CD4-positive, alpha-beta T cell (primary cell): ENCODE measurements at regions of chr3 and their contacts with region 1.

Region 1: GRCh38 chr3:32143849-32144757 is 37.7 kb downstream of the GPD1L start:
- DNase-seq: peak in 12 of 14 experiments; percentile 5 to 81 (median 30)
- ATAC-seq: peak; percentile 55
- H3K4me3 ChIP-seq: no peak overlapping the region
- H3K4me3 Mint-ChIP-seq: no peak overlapping the region
- H3K27ac ChIP-seq: no peak overlapping the region
- H3K27ac Mint-ChIP-seq: no peak overlapping the region
- H3K4me1 ChIP-seq: no peaks in the 10 kb centered on the region
- H3K4me1 Mint-ChIP-seq: peaks cover 11% of the 10 kb centered on the region
- H3K27me3 ChIP-seq: no peaks in the 10 kb centered on the region
- H3K27me3 Mint-ChIP-seq: no peaks in the 10 kb centered on the region
- CTCF ChIP-seq: peak; percentile 94

Region 2: GRCh38 chr3:30768703-30769685 is 1375.1 kb before region 1 on chr3:
- CTCF ChIA-PET with region 1: no interaction called
- POLR2A ChIA-PET with region 1: no interaction called
- intact Hi-C with region 1: loop called in 1 of 2 experiments (anchors 1 kb)
- DNase-seq: peak; percentile 49 to 78 (median 64)
- ATAC-seq: peak; percentile 60
- H3K4me3 ChIP-seq: no peak overlapping the region
- H3K4me3 Mint-ChIP-seq: no peak overlapping the region
- H3K27ac ChIP-seq: no peak overlapping the region
- H3K27ac Mint-ChIP-seq: no peak overlapping the region
- H3K4me1 ChIP-seq: no peaks in the 10 kb centered on the region
- H3K4me1 Mint-ChIP-seq: peaks cover 5% of the 10 kb centered on the region
- H3K27me3 ChIP-seq: no peaks in the 10 kb centered on the region
- H3K27me3 Mint-ChIP-seq: peaks cover 9% of the 10 kb centered on the region
- CTCF ChIP-seq: peak; percentile 83

Region 3: DNA sequence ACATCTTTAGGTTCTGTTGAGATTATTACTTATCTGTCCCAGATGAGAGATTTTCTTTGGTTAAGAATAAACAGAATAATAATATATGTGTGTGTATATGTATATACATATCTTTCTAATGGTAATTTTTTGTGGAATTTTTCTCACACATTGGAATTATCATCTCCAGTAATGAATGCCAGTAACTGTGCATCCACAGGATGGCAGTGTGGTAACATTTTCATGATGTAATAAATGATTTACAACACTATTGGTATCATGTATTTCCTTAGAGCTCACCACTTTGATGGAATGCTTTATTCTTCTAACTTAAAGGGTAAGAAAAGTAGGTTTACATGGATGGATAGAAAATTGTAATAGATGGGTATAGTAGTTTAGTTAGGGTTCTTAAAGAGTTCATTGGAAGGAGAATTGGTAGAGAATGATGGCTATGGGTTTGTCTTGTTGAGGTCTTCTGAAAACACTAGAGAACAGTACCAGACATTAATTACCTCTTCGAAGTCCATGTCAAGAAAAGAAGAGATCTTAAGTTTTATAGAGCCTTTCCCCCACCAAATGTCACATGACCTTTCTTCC is 533.3 kb before region 1 on chr3:
- CTCF ChIA-PET with region 1: no interaction called
- POLR2A ChIA-PET with region 1: no interaction called
- intact Hi-C with region 1: loop called in 1 of 2 experiments (anchors 2 kb)
- DNase-seq: peak in 3 of 14 experiments; percentile 14 to 38 (median 25)
- ATAC-seq: no peak
- H3K4me3 ChIP-seq: no peak overlapping the region
- H3K4me3 Mint-ChIP-seq: no peak overlapping the region
- H3K27ac ChIP-seq: no peak overlapping the region
- H3K27ac Mint-ChIP-seq: peak overlapping the region; percentile 6
- H3K4me1 ChIP-seq: no peaks in the 10 kb centered on the region
- H3K4me1 Mint-ChIP-seq: peaks cover 82% of the 10 kb centered on the region
- H3K27me3 ChIP-seq: no peaks in the 10 kb centered on the region
- H3K27me3 Mint-ChIP-seq: no peaks in the 10 kb centered on the region
- CTCF ChIP-seq: no peak

Region 4: GRCh38 chr3:31724661-31725060 is 419.4 kb before region 1 on chr3:
- CTCF ChIA-PET with region 1: no interaction called
- POLR2A ChIA-PET with region 1: no interaction called
- intact Hi-C with region 1: loop called in 1 of 2 experiments (anchors 10 kb)
- DNase-seq: no peak
- ATAC-seq: no peak
- H3K4me3 ChIP-seq: no peak overlapping the region
- H3K4me3 Mint-ChIP-seq: no peak overlapping the region
- H3K27ac ChIP-seq: no peak overlapping the region
- H3K27ac Mint-ChIP-seq: no peak overlapping the region
- H3K4me1 ChIP-seq: no peaks in the 10 kb centered on the region
- H3K4me1 Mint-ChIP-seq: no peaks in the 10 kb centered on the region
- H3K27me3 ChIP-seq: peaks cover 0 to 2% of the 10 kb centered on the region in 2 experiments
- H3K27me3 Mint-ChIP-seq: no peaks in the 10 kb centered on the region
- CTCF ChIP-seq: no peak

Region 5: GRCh38 chr3:32018757-32019564 is 125.1 kb before region 1 on chr3:
- CTCF ChIA-PET with region 1: interaction called, 24 read pairs
- POLR2A ChIA-PET with region 1: interaction called, 4 read pairs
- intact Hi-C with region 1: loop called (anchors 1 kb)
- DNase-seq: peak in 4 of 14 experiments; percentile 13 to 62 (median 54)
- ATAC-seq: no peak
- H3K4me3 ChIP-seq: no peak overlapping the region
- H3K4me3 Mint-ChIP-seq: no peak overlapping the region
- H3K27ac ChIP-seq: no peak overlapping the region
- H3K27ac Mint-ChIP-seq: no peak overlapping the region
- H3K4me1 ChIP-seq: no peaks in the 10 kb centered on the region
- H3K4me1 Mint-ChIP-seq: no peaks in the 10 kb centered on the region
- H3K27me3 ChIP-seq: no peaks in the 10 kb centered on the region
- H3K27me3 Mint-ChIP-seq: no peaks in the 10 kb centered on the region
- CTCF ChIP-seq: peak; percentile 88

Region 6: GRCh38 chr3:32093204-32093603 is 50.9 kb before region 1 on chr3:
- CTCF ChIA-PET with region 1: no interaction called
- POLR2A ChIA-PET with region 1: no interaction called
- intact Hi-C with region 1: no loop called
- DNase-seq: no peak
- ATAC-seq: no peak
- H3K4me3 ChIP-seq: no peak overlapping the region
- H3K4me3 Mint-ChIP-seq: no peak overlapping the region
- H3K27ac ChIP-seq: no peak overlapping the region
- H3K27ac Mint-ChIP-seq: no peak overlapping the region
- H3K4me1 ChIP-seq: no peaks in the 10 kb centered on the region
- H3K4me1 Mint-ChIP-seq: peaks cover 7% of the 10 kb centered on the region
- H3K27me3 ChIP-seq: no peaks in the 10 kb centered on the region
- H3K27me3 Mint-ChIP-seq: peaks cover 5% of the 10 kb centered on the region
- CTCF ChIP-seq: no peak

Region 7: DNA sequence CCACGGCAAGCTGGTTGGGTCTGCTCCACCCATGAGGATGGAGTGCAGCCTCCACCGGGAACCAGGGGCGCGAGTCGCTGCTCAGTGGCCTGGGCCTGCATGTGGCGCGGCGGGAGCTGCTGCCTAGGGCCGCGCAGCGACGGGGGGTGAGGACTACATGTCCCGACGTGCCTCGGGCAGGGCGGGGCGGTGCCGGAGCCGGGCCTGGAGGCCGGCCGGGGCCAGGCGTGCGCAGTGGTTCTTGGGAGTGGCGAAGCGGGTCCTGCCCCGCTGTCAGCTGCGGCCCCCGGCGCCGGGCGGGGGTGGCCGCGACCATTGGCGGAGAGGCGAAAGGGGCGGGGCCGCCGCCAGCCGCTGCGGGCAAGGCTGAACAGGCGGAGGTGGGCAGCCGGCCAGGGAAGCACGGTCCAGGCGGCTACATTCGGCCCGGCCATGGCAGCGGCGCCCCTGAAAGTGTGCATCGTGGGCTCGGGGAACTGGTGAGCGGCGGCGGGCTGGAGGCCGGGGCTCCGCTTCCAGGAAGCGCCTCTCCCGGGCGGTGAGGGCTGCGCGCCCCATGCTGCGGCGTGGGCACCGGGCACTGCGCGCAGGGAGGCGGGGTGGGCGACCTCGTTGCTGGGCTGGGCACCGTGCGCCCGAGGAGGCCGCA is 37.7 kb before region 1 on chr3 and contains the start of gene GPD1L:
- CTCF ChIA-PET with region 1: interaction called, 3 read pairs
- POLR2A ChIA-PET with region 1: interaction called, 3 read pairs
- intact Hi-C with region 1: loop called (anchors 5 kb)
- DNase-seq: peak; percentile 76 to 96 (median 90)
- ATAC-seq: peak; percentile 97
- H3K4me3 ChIP-seq: peak within 1 kb of the TSS; percentile 80
- H3K4me3 Mint-ChIP-seq: peak within 1 kb of the TSS; percentile 97
- H3K27ac ChIP-seq: peak within 1 kb of the TSS; percentile 21 to 29
- H3K27ac Mint-ChIP-seq: peak within 1 kb of the TSS; percentile 66
- H3K4me1 ChIP-seq: peaks cover 39% of the 10 kb centered on the region
- H3K4me1 Mint-ChIP-seq: peaks cover 34% of the 10 kb centered on the region
- H3K27me3 ChIP-seq: no peaks in the 10 kb centered on the region
- H3K27me3 Mint-ChIP-seq: no peaks in the 10 kb centered on the region
- CTCF ChIP-seq: no peak
- total RNA-seq, gene GPD1L: 15.3 to 16.0 TPM

Region 8: GRCh38 chr3:32121096-32121495 is 23.0 kb before region 1 on chr3:
- CTCF ChIA-PET with region 1: no interaction called
- POLR2A ChIA-PET with region 1: no interaction called
- intact Hi-C with region 1: no loop called
- DNase-seq: no peak
- ATAC-seq: no peak
- H3K4me3 ChIP-seq: no peak overlapping the region
- H3K4me3 Mint-ChIP-seq: no peak overlapping the region
- H3K27ac ChIP-seq: no peak overlapping the region
- H3K27ac Mint-ChIP-seq: no peak overlapping the region
- H3K4me1 ChIP-seq: peaks cover 7% of the 10 kb centered on the region
- H3K4me1 Mint-ChIP-seq: peaks cover 51% of the 10 kb centered on the region
- H3K27me3 ChIP-seq: no peaks in the 10 kb centered on the region
- H3K27me3 Mint-ChIP-seq: no peaks in the 10 kb centered on the region
- CTCF ChIP-seq: no peak

Region 9: GRCh38 chr3:32646761-32647160 is 502.7 kb after region 1 on chr3:
- CTCF ChIA-PET with region 1: no interaction called
- POLR2A ChIA-PET with region 1: no interaction called
- intact Hi-C with region 1: no loop called
- DNase-seq: no peak
- ATAC-seq: no peak
- H3K4me3 ChIP-seq: no peak overlapping the region
- H3K4me3 Mint-ChIP-seq: no peak overlapping the region
- H3K27ac ChIP-seq: no peak overlapping the region
- H3K27ac Mint-ChIP-seq: no peak overlapping the region
- H3K4me1 ChIP-seq: no peaks in the 10 kb centered on the region
- H3K4me1 Mint-ChIP-seq: no peaks in the 10 kb centered on the region
- H3K27me3 ChIP-seq: peaks cover 0 to 3% of the 10 kb centered on the region in 2 experiments
- H3K27me3 Mint-ChIP-seq: no peaks in the 10 kb centered on the region
- CTCF ChIP-seq: no peak